Ascending aorta (tissue), 2 donors: ENCODE measurements at regions of chrX and their contacts with region 1.

Region 1: DNA sequence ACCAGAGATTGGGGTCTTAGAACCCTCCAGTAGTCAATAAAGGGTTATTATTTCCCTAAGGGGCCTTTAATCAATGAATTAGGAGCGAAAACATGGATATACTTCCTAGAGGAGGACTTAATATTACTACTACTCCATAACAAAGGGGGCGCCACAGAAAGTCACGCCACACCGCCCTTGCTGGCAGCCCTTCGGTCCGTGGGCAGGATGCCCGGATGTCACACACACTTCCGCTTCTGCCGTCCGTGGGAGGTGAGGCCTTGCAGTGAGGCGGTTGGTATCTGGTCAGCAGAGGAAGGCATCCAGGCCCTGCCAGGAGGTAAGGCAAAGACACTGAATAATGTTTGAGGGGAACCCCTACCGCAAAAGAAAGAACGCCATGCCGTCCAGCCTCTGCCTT is 436 bp downstream of the MAGEB10 start:
- DNase-seq: no peak
- H3K4me3 ChIP-seq: no peak overlapping the region
- H3K27ac ChIP-seq: no peak overlapping the region
- H3K4me1 ChIP-seq: no peaks in the 10 kb centered on the region
- H3K27me3 ChIP-seq: no peaks in the 10 kb centered on the region
- CTCF ChIP-seq: no peak

Region 2: DNA sequence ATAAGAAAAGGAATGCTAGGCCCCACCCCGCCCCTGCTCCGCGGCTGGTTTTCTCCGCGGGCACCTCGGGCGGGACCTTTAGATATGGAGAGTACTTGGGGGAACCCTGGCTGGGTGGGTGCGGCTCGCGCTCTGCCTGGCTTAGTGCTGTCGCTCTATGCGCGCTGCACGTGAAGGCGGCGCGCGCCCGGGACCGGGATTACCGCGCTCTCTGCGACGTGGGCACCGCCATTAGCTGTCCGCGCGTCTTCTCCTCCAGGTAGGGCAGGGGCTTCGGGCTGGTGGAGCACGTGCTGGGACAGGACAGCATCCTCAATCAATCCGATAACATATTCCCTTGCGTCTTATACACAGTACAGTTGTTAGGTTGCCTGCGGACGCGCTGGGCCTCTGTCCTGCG is 55.6 kb after region 1 on chrX:
- intact Hi-C with region 1: loop called (anchors 10 kb)
- DNase-seq: no peak
- H3K4me3 ChIP-seq: no peak overlapping the region
- H3K27ac ChIP-seq: no peak overlapping the region
- H3K4me1 ChIP-seq: no peaks in the 10 kb centered on the region
- H3K27me3 ChIP-seq: no peaks in the 10 kb centered on the region
- CTCF ChIP-seq: no peak